CD8-positive, alpha-beta T cell (primary cell): ENCODE measurements at regions of chr1 and their contacts with region 1.

Region 1: GRCh38 chr1:89125913-89126580 is at the start of gene GBP2:
- DNase-seq: peak in 5 of 9 experiments; percentile 24 to 77 (median 44)
- ATAC-seq: peak; percentile 74
- H3K4me3 ChIP-seq: peak within 1 kb of the TSS; percentile 59 to 75
- H3K4me3 Mint-ChIP-seq: peak within 1 kb of the TSS; percentile 97
- H3K27ac ChIP-seq: peak within 1 kb of the TSS; percentile 59 to 78
- H3K27ac Mint-ChIP-seq: peak within 1 kb of the TSS; percentile 99
- H3K4me1 ChIP-seq: peaks cover 39% of the 10 kb centered on the region
- H3K4me1 Mint-ChIP-seq: peaks cover 66% of the 10 kb centered on the region
- H3K27me3 ChIP-seq: no peaks in the 10 kb centered on the region
- H3K27me3 Mint-ChIP-seq: no peaks in the 10 kb centered on the region
- CTCF ChIP-seq: no peak
- total RNA-seq, gene GBP2: 120 to 125 TPM

Region 2: DNA sequence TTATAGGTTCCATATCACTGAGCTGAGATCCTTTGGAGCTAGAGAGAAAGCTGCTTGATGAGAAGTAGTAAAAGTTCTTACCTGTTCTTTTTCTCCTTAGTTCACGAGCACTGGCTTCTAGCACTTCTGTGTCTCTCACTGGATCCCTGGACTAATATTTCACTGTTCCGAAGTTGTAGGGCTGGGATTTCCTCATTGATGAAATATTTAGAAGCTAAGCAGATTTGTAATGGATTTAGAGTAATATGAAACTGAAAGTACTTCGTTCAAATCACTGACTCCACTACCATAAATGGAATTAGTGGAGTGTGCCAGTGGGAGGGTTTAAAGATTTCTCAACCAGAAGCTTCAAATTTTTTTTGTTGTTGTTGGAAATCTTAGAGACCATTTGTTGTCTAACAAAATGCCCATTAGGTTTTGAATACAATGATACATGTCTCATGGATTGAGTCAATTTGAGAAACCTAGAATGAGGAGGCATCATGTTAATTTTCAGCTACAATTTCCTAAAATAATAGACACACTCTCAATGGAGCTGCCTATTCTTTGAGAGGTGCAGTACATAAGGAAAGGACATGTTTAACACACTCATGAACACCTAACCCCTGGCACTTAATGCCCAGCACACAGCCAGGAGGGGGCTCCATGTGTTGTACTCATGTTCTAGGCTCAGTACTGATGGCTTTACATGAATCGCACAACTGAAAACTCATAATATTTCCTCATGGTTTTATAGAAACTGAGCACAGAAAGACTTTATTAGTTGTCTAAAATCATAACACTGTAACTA is 60.8 kb before region 1 on chr1 and contains the start of gene GBP1:
- CTCF ChIA-PET with region 1: no interaction called
- POLR2A ChIA-PET with region 1: interaction called, 5 read pairs
- intact Hi-C with region 1: loop called (anchors 2 kb)
- DNase-seq: peak in 2 of 9 experiments; percentile 63 to 78
- ATAC-seq: peak; percentile 85
- H3K4me3 ChIP-seq: peak within 1 kb of the TSS; percentile 60 to 68
- H3K4me3 Mint-ChIP-seq: peak within 1 kb of the TSS; percentile 98
- H3K27ac ChIP-seq: peak within 1 kb of the TSS; percentile 65 to 80
- H3K27ac Mint-ChIP-seq: peak within 1 kb of the TSS; percentile 98
- H3K4me1 ChIP-seq: peaks cover 35% of the 10 kb centered on the region
- H3K4me1 Mint-ChIP-seq: peaks cover 63% of the 10 kb centered on the region
- H3K27me3 ChIP-seq: no peaks in the 10 kb centered on the region
- H3K27me3 Mint-ChIP-seq: no peaks in the 10 kb centered on the region
- CTCF ChIP-seq: no peak
- total RNA-seq, gene GBP1: 20.8 to 25.9 TPM

Region 3: GRCh38 chr1:89100412-89100811 is 25.6 kb before region 1 on chr1:
- CTCF ChIA-PET with region 1: no interaction called
- POLR2A ChIA-PET with region 1: no interaction called
- intact Hi-C with region 1: no loop called
- DNase-seq: no peak
- ATAC-seq: no peak
- H3K4me3 ChIP-seq: no peak overlapping the region
- H3K4me3 Mint-ChIP-seq: no peak overlapping the region
- H3K27ac ChIP-seq: no peak overlapping the region
- H3K27ac Mint-ChIP-seq: no peak overlapping the region
- H3K4me1 ChIP-seq: no peaks in the 10 kb centered on the region
- H3K4me1 Mint-ChIP-seq: peaks cover 3% of the 10 kb centered on the region
- H3K27me3 ChIP-seq: no peaks in the 10 kb centered on the region
- H3K27me3 Mint-ChIP-seq: no peaks in the 10 kb centered on the region
- CTCF ChIP-seq: no peak

Region 4: GRCh38 chr1:89112871-89113613 is 13.0 kb before region 1 on chr1:
- CTCF ChIA-PET with region 1: interaction called, 6 read pairs
- POLR2A ChIA-PET with region 1: interaction called, 12 read pairs
- intact Hi-C with region 1: loop called in 1 of 2 experiments (anchors 2 kb)
- DNase-seq: no peak
- ATAC-seq: no peak
- H3K4me3 ChIP-seq: no peak overlapping the region
- H3K4me3 Mint-ChIP-seq: no peak overlapping the region
- H3K27ac ChIP-seq: no peak overlapping the region
- H3K27ac Mint-ChIP-seq: peak overlapping the region; percentile 46
- H3K4me1 ChIP-seq: peaks cover 4% of the 10 kb centered on the region
- H3K4me1 Mint-ChIP-seq: peaks cover 41% of the 10 kb centered on the region
- H3K27me3 ChIP-seq: no peaks in the 10 kb centered on the region
- H3K27me3 Mint-ChIP-seq: no peaks in the 10 kb centered on the region
- CTCF ChIP-seq: no peak

Region 5: DNA sequence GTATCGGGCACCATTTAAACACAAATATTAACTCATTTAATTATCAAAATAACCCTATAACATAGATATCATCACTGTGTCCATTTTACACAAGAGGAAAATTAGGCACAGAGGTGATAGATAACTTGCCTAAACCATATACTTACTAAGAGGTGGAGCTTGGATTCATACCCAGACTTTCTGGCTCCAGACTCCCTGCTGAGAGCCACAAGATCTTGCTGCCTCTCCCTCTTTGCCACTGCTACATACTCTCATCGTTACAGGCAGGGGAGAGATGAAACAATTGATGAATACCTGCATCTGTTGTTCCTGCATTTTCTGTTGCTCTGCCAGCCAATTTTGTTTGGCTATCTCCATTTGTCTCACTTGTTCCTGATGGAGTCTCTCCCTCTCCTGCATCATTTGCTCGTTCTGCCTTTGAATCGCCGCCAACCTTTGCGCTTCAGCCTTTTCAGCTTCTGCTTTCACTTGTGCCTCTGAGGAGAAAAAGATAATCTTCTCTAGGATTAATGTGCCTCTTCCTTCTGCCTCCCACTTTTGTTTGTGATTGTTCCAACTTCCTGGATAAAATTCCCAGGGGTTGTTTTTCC is 136.0 kb after region 1 on chr1:
- CTCF ChIA-PET with region 1: interaction called, 3 read pairs
- POLR2A ChIA-PET with region 1: interaction called, 4 read pairs
- intact Hi-C with region 1: loop called in 1 of 2 experiments (anchors 2 kb)
- DNase-seq: no peak
- ATAC-seq: no peak
- H3K4me3 ChIP-seq: no peak overlapping the region
- H3K4me3 Mint-ChIP-seq: peak overlapping the region; percentile 32
- H3K27ac ChIP-seq: peak overlapping the region in 1 of 2 experiments; percentile 55
- H3K27ac Mint-ChIP-seq: peak overlapping the region; percentile 78
- H3K4me1 ChIP-seq: peaks cover 58% of the 10 kb centered on the region
- H3K4me1 Mint-ChIP-seq: peaks cover 82% of the 10 kb centered on the region
- H3K27me3 ChIP-seq: no peaks in the 10 kb centered on the region
- H3K27me3 Mint-ChIP-seq: no peaks in the 10 kb centered on the region
- CTCF ChIP-seq: no peak